ENCODE measurements at regions of chr18 and their contacts with region 1.

Region 1: GRCh38 chr18:54679318-54680149 is 88.5 kb downstream of the DYNAP start:
- DNase-seq: peak in 2 of 9 experiments; percentile 47 to 58
- ATAC-seq: no peak
- H3K4me3 ChIP-seq: no peak overlapping the region
- H3K4me3 Mint-ChIP-seq: no peak overlapping the region
- H3K27ac ChIP-seq: no peak overlapping the region
- H3K27ac Mint-ChIP-seq: no peak overlapping the region
- H3K4me1 ChIP-seq: no peaks in the 10 kb centered on the region
- H3K4me1 Mint-ChIP-seq: no peaks in the 10 kb centered on the region
- H3K27me3 ChIP-seq: no peaks in the 10 kb centered on the region
- H3K27me3 Mint-ChIP-seq: peaks cover 2% of the 10 kb centered on the region
- CTCF ChIP-seq: no peak

Region 2: DNA sequence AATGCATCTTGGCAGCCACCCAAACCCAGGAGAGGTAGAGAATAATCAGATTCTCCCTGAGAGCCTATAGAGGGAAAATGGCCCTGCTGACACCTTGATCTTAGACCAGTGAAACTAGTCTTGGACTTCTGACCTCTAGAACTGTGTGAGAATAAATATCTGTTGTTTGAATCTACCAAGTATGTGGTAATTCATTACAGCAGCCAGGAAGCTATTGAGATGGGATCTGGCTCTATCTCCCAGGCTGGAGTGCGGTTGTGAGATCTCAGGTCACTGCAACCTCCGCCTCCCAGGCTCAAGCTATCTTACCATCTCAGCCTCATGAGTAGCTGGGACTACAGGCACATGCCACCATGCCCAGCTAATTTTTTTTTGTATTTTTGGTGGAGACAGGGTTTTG is 1022.3 kb before region 1 on chr18:
- CTCF ChIA-PET with region 1: no interaction called
- POLR2A ChIA-PET with region 1: no interaction called
- intact Hi-C with region 1: no loop called
- DNase-seq: no peak
- ATAC-seq: no peak
- H3K4me3 ChIP-seq: no peak overlapping the region
- H3K4me3 Mint-ChIP-seq: no peak overlapping the region
- H3K27ac ChIP-seq: no peak overlapping the region
- H3K27ac Mint-ChIP-seq: no peak overlapping the region
- H3K4me1 ChIP-seq: no peaks in the 10 kb centered on the region
- H3K4me1 Mint-ChIP-seq: no peaks in the 10 kb centered on the region
- H3K27me3 ChIP-seq: no peaks in the 10 kb centered on the region
- H3K27me3 Mint-ChIP-seq: no peaks in the 10 kb centered on the region
- CTCF ChIP-seq: no peak

Region 3: DNA sequence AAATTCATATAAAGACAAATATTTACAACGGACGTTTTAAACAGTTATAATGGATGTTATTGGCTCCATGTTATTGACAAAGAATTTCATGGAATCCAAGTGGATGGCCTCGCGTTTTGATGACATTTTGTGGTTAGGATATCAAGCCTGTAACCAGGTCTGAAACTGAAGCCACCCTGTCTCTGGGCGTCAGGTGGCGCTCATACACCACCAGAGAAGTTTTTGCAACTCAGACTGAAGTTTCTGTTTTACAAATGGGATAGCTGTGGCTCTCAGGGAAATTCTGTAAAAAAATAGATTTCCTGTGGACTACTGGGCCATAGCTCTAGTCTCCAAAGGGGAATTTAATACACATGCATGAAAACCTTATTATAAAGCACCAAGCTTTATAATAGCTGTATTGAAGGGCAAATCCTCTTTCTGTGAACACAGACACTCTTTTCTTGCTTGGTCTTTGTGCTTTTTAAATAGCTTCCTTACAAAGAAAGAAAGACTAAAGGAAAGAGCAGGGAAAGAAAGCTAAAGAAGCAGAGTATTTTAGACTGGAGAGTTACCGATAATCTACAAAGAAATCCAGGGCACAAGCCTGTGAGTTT is 235.1 kb before region 1 on chr18:
- CTCF ChIA-PET with region 1: no interaction called
- POLR2A ChIA-PET with region 1: no interaction called
- intact Hi-C with region 1: loop called in 1 of 2 experiments (anchors 2 kb)
- DNase-seq: peak in 2 of 9 experiments; percentile 6 to 29
- ATAC-seq: no peak
- H3K4me3 ChIP-seq: no peak overlapping the region
- H3K4me3 Mint-ChIP-seq: no peak overlapping the region
- H3K27ac ChIP-seq: no peak overlapping the region
- H3K27ac Mint-ChIP-seq: no peak overlapping the region
- H3K4me1 ChIP-seq: no peaks in the 10 kb centered on the region
- H3K4me1 Mint-ChIP-seq: no peaks in the 10 kb centered on the region
- H3K27me3 ChIP-seq: no peaks in the 10 kb centered on the region
- H3K27me3 Mint-ChIP-seq: peaks cover 27% of the 10 kb centered on the region
- CTCF ChIP-seq: peak; percentile 18

Measured in CD8-positive, alpha-beta T cell (primary cell).